A673 (cell line): ENCODE measurements at regions of chr12 and their contacts with region 1.

Region 1: GRCh38 chr12:39887856-39888255 is 218.0 kb downstream of the SLC2A13 start:
- DNase-seq: no peak
- H3K4me3 ChIP-seq: no peak overlapping the region
- H3K27ac ChIP-seq: no peak overlapping the region
- H3K4me1 ChIP-seq: peaks cover 12% of the 10 kb centered on the region
- H3K27me3 ChIP-seq: no peaks in the 10 kb centered on the region
- CTCF ChIP-seq: no peak

Region 2: GRCh38 chr12:39431797-39432196 is 456.1 kb before region 1 on chr12:
- CTCF ChIA-PET with region 1: no interaction called
- POLR2A ChIA-PET with region 1: no interaction called
- intact Hi-C with region 1: no loop called
- DNase-seq: no peak
- H3K4me3 ChIP-seq: no peak overlapping the region
- H3K27ac ChIP-seq: no peak overlapping the region
- H3K4me1 ChIP-seq: no peaks in the 10 kb centered on the region
- H3K27me3 ChIP-seq: no peaks in the 10 kb centered on the region
- CTCF ChIP-seq: no peak

Region 3: DNA sequence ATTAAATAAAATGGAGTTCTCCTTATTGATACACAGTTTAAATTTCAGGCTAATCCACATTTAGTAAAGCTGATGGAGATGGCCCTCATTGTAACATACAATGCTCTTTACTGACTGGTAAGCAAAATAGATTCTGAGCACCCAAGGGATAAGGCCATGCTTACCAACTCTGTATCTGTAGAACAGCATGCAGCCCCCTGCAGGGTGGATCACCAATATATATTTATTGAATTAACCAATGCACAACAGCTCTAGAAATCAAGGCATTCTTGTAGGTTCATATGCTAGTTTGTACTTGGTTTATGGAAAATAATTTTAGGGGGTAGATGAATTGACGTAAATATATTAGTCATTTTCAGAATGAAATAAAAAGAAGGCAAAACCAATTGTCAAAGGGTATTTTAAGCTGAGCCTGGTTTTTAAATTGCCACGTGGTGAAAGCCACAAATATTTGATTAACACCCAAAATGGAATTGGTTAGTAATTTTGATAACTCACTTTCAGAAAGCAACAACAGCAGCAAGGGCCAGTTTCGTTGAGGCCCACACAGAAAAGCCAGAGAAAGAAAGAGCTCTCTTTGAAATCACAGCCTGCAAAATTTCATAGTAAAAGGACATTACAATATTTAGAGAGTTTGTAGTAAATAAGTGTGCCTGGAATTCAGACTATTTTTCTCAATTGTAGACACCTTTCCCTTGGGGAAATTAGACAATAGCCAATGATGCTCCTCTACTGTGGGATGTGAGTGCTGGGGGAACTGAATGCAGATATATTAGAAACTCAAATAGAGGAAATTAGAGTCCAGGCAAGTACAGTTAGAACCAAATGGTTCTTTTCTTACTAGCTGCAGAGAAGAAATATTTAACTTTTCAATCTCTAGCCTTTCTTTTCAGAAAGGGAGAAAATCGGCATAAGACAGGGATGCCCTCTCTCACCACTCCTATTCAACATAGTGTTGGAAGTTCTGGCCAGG is 52.1 kb before region 1 on chr12:
- CTCF ChIA-PET with region 1: no interaction called
- POLR2A ChIA-PET with region 1: no interaction called
- intact Hi-C with region 1: loop called (anchors 5 kb)
- DNase-seq: no peak
- H3K4me3 ChIP-seq: no peak overlapping the region
- H3K27ac ChIP-seq: no peak overlapping the region
- H3K4me1 ChIP-seq: no peaks in the 10 kb centered on the region
- H3K27me3 ChIP-seq: no peaks in the 10 kb centered on the region
- CTCF ChIP-seq: no peak

Region 4: DNA sequence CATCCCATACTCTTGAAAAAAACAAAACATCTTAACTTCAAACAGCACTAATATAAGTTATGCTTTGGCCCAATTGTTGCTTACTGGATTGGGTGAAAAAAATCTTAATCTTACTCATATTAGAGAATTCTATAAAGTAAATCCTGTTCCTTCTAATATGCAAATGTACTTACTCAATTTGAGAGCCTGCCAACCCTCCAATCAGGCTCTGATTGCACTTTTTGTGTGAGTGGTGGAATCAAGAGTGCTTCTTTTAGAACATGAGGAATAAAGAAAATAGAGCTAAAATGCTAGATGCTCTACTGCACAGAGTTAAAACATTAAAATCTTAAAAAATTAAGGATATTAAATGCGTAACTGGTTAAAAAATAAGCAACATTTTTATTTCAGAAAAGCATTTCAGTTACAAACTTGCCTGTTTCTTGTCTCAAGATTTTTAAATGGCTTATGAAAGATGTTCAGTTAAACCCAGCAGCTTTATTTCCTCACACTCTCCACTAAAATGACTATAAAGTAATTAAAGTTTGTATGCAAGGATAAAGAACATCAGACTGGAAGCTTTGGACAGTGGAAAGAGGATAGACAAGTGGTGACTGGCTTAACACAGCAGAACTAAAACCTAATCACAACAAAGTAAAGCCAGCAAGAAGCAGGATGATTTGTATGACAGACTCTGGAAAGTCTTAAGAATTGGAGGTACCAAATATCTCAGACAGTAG is 40.5 kb after region 1 on chr12:
- CTCF ChIA-PET with region 1: no interaction called
- POLR2A ChIA-PET with region 1: no interaction called
- intact Hi-C with region 1: loop called (anchors 5 kb)
- DNase-seq: no peak
- H3K4me3 ChIP-seq: no peak overlapping the region
- H3K27ac ChIP-seq: no peak overlapping the region
- H3K4me1 ChIP-seq: no peaks in the 10 kb centered on the region
- H3K27me3 ChIP-seq: no peaks in the 10 kb centered on the region
- CTCF ChIP-seq: no peak